ENCODE measurements at regions of chr11 and their contacts with region 1.

Region 1: GRCh38 chr11:76369406-76369805 is 11.5 kb downstream of the THAP12 start:
- DNase-seq: no peak
- ATAC-seq: no peak
- H3K4me3 ChIP-seq: no peak overlapping the region
- H3K27ac ChIP-seq: no peak overlapping the region
- H3K4me1 ChIP-seq: peaks cover 34% of the 10 kb centered on the region
- H3K27me3 ChIP-seq: no peaks in the 10 kb centered on the region
- CTCF ChIP-seq: no peak

Region 2: GRCh38 chr11:76524919-76525318 is 155.5 kb after region 1 on chr11:
- CTCF ChIA-PET with region 1: no interaction called
- POLR2A ChIA-PET with region 1: no interaction called
- in situ Hi-C with region 1: no loop called
- intact Hi-C with region 1: loop called (anchors 10 kb)
- DNase-seq: no peak
- ATAC-seq: peak; percentile 79
- H3K4me3 ChIP-seq: no peak overlapping the region
- H3K27ac ChIP-seq: no peak overlapping the region
- H3K4me1 ChIP-seq: no peaks in the 10 kb centered on the region
- H3K27me3 ChIP-seq: no peaks in the 10 kb centered on the region
- CTCF ChIP-seq: no peak

Measured in Panc1 (cell line).